ENCODE measurements at regions of chr6 and their contacts with region 1.

Region 1: DNA sequence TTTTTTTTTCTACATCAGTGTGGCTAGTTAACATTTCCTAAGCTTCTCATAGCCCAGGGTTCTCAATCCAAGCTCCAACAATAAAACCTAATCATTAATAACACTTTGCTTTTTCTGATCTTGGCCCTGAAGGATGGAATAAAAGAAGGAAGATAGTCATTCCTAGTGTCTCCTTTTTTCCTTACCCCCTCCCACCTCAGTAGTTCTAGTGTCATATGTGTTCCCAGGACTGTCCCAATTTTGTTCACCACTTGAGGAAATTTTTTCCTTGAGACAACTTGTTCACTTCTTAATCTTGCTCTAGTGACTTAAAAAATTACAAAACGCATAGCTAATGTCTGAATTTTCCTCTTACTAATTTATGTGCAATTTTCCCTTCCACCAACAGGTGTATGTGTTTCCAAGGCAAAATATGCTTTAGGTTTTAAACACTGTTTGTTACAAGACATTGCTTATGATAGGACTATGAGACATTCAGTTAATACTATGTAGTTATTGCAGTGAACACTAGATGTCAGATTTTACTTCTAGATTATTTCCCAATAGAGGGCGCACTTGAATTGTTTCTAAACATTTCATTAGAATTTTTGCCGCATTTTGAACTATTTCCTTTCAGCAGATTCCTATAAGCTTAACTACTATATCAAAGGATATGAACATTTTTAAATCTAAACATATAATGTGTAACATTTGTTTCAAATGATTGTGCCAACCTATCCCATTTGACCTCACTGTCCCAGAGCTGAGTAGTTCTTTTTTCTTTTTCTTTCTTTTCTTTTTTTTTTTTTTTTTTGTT is 18.5 kb upstream of the C6orf141 start:
- DNase-seq: no peak
- H3K4me3 ChIP-seq: peak overlapping the region; percentile 35
- H3K27ac ChIP-seq: no peak overlapping the region
- H3K4me1 ChIP-seq: peaks cover 4% of the 10 kb centered on the region
- H3K27me3 ChIP-seq: no peaks in the 10 kb centered on the region
- CTCF ChIP-seq: peak; percentile 77

Region 2: DNA sequence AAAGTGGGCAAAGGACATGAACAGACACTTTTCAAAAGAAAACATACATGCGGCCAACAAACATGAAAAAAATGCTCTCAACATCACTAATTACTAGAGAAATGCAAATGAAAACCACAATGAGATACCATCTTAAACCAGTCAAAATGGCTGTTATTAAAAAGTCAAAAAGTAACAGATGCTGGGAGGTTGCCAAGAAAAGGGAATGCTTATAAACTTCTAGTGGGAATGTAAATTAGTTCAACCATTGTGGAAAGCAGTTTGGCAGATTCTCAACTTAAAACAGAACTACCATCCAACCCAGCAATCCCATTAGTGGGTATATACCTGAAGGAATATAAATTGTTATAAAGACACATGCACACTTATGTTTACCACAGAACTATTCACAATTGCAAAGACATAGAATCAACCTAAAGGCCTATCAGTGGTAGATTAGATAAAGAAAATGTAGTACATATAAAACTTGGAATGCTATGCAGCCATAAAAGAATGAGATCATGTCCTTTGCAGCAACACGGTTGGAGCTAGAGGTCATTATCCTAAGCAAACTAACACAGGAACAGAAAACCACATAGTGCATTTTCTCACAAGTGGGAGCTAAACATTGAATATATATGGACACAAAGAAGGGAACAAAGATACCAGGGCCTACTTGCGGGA is 52.5 kb before region 1 on chr6:
- intact Hi-C with region 1: no loop called
- DNase-seq: no peak
- H3K4me3 ChIP-seq: no peak overlapping the region
- H3K27ac ChIP-seq: no peak overlapping the region
- H3K4me1 ChIP-seq: no peaks in the 10 kb centered on the region
- H3K27me3 ChIP-seq: no peaks in the 10 kb centered on the region
- CTCF ChIP-seq: no peak

Region 3: DNA sequence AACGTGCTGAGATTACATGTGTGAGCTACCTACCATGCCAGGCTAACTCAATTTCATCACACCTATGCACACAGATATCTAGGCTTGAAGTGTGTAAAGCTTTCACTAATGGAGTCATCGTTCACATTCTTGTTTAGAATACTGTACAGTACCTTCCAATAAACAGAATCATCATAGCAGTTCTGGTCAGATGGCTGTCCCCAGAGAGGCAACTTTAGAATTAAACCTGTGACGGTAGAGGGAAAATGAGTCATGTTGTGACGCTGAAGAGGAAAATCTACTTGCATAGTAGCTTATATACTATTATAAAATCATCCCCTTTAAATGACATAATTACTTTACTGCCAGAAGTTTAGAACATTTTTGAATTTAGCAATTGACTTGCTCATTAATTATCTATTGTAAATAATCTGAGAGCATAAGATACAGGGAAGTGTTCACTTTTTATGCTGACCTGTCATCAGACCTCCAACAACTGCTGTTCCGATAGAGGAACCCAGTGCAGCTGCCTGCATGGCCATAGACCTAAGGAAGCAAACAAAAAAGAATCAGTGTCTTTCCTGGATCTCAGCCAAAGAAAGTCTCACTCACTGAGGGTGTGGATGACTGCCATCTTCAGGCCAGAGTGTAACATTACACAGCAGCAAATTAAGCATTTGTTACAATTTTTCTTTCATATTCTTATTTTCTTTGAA is 74.9 kb after region 1 on chr6:
- intact Hi-C with region 1: loop called (anchors 5 kb)
- DNase-seq: no peak
- H3K4me3 ChIP-seq: no peak overlapping the region
- H3K27ac ChIP-seq: no peak overlapping the region
- H3K4me1 ChIP-seq: no peaks in the 10 kb centered on the region
- H3K27me3 ChIP-seq: peaks cover 6% of the 10 kb centered on the region
- CTCF ChIP-seq: peak; percentile 87

Region 4: GRCh38 chr6:49849213-49849907 is 317.4 kb after region 1 on chr6:
- intact Hi-C with region 1: loop called (anchors 5 kb)
- DNase-seq: no peak
- H3K4me3 ChIP-seq: no peak overlapping the region
- H3K27ac ChIP-seq: no peak overlapping the region
- H3K4me1 ChIP-seq: no peaks in the 10 kb centered on the region
- H3K27me3 ChIP-seq: peaks cover 33% of the 10 kb centered on the region
- CTCF ChIP-seq: peak; percentile 73

Region 5: DNA sequence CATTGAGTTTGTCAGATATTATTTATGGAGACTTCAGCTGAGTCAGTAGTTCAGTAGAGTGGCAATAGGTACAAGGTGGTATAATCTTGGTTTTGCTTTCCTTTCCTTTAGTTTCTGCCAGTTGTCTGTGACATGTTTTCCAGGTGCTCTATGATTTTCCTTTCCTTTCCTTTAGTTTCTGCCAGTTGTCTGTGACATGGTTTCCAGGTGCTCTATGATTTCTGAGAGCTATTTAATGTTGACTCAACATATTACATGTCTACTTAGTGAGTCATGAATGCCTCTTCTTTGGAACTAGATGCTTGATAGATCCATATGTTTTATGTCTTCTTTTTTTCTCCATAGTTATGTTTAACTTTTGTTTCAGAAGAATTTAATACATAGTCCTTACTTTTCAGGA is 704.2 kb after region 1 on chr6:
- intact Hi-C with region 1: no loop called
- DNase-seq: no peak
- H3K4me3 ChIP-seq: no peak overlapping the region
- H3K27ac ChIP-seq: no peak overlapping the region
- H3K4me1 ChIP-seq: no peaks in the 10 kb centered on the region
- H3K27me3 ChIP-seq: no peaks in the 10 kb centered on the region
- CTCF ChIP-seq: no peak

Measured in left ventricle myocardium inferior (tissue), 1 donor.